ENCODE measurements at regions of chr3 and their contacts with region 1.

Region 1: GRCh38 chr3:129026728-129027543 is 25.8 kb downstream of the EFCC1 start:
- DNase-seq: peak; percentile 53
- ATAC-seq: peak; percentile 100
- H3K4me3 ChIP-seq: peak overlapping the region; percentile 74
- H3K27ac ChIP-seq: no peak overlapping the region
- H3K4me1 ChIP-seq: peaks cover 5% of the 10 kb centered on the region
- H3K27me3 ChIP-seq: peaks cover 0 to 4% of the 10 kb centered on the region in 2 experiments; a peak in 1 of 4 replicates
- CTCF ChIP-seq: peak; percentile 39 to 73 (median 64); a peak in 5 of 6 replicates
- EP300 ChIP-seq: no peak
- POLR2A ChIP-seq: peak; percentile 77
- RAD21 ChIP-seq: no peak

Region 2: DNA sequence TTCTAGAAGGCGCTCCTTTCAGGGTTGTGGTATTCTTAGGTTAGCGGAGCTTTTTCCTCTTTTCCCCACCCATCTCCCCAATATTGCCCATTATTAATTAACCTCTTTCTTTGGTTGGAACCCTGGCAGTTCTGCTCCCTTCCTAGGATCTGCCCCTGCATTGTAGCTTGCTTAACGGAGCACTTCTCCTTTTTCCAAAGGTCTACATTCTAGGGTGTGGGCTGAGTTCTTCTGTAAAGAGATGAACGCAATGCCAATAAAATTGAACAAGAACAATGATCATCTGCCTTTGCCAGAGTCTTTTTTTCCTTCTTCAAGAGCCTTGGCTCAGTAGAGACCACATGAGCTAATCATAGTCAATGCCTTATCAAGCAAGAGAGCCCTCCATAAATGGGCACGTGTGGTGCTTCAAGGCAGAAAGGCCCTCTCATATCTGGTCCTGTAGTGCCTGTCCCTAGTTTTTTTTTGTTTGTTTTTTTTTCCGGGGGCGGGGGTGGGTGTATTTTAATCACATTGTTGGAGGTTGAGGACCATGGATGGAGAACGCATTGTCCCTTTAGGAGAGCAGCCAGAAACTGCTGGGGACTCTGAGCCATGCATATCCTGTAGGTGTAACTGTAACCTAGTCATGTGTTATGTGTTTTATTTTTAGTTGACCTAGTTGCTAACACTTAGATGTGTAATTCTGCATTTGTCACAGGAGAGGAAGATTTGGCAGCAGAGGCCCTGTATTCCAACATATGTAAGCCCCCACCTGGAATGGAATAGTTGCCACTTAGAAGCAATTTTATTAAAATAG is 212.2 kb before region 1 on chr3:
- CTCF ChIA-PET with region 1: no interaction called
- POLR2A ChIA-PET with region 1: no interaction called
- RAD21 ChIA-PET with region 1: no interaction called
- SMC1A ChIA-PET with region 1: no interaction called
- in situ Hi-C with region 1: no loop called
- intact Hi-C with region 1: no loop called
- DNase-seq: no peak
- ATAC-seq: no peak
- H3K4me3 ChIP-seq: no peak overlapping the region
- H3K27ac ChIP-seq: no peak overlapping the region
- H3K4me1 ChIP-seq: no peaks in the 10 kb centered on the region
- H3K27me3 ChIP-seq: no peaks in the 10 kb centered on the region
- CTCF ChIP-seq: no peak
- EP300 ChIP-seq: no peak
- POLR2A ChIP-seq: no peak
- RAD21 ChIP-seq: no peak

Region 3: GRCh38 chr3:129016356-129016719 is 10.6 kb before region 1 on chr3:
- CTCF ChIA-PET with region 1: interaction called, 39 read pairs
- POLR2A ChIA-PET with region 1: interaction called, 10 read pairs
- RAD21 ChIA-PET with region 1: interaction called, 7 read pairs
- SMC1A ChIA-PET with region 1: interaction called, 12 read pairs
- in situ Hi-C with region 1: no loop called
- intact Hi-C with region 1: no loop called
- DNase-seq: no peak
- ATAC-seq: peak; percentile 77
- H3K4me3 ChIP-seq: no peak overlapping the region
- H3K27ac ChIP-seq: no peak overlapping the region
- H3K4me1 ChIP-seq: peaks cover 19% of the 10 kb centered on the region
- H3K27me3 ChIP-seq: no peaks in the 10 kb centered on the region
- CTCF ChIP-seq: peak in 1 of 3 experiments; percentile 12; a peak in 1 of 6 replicates
- EP300 ChIP-seq: no peak
- POLR2A ChIP-seq: no peak
- RAD21 ChIP-seq: no peak

Measured in GM12878 (cell line).